WTC11 (cell line): ENCODE measurements at regions of chr17 and their contacts with region 1.

Region 1: DNA sequence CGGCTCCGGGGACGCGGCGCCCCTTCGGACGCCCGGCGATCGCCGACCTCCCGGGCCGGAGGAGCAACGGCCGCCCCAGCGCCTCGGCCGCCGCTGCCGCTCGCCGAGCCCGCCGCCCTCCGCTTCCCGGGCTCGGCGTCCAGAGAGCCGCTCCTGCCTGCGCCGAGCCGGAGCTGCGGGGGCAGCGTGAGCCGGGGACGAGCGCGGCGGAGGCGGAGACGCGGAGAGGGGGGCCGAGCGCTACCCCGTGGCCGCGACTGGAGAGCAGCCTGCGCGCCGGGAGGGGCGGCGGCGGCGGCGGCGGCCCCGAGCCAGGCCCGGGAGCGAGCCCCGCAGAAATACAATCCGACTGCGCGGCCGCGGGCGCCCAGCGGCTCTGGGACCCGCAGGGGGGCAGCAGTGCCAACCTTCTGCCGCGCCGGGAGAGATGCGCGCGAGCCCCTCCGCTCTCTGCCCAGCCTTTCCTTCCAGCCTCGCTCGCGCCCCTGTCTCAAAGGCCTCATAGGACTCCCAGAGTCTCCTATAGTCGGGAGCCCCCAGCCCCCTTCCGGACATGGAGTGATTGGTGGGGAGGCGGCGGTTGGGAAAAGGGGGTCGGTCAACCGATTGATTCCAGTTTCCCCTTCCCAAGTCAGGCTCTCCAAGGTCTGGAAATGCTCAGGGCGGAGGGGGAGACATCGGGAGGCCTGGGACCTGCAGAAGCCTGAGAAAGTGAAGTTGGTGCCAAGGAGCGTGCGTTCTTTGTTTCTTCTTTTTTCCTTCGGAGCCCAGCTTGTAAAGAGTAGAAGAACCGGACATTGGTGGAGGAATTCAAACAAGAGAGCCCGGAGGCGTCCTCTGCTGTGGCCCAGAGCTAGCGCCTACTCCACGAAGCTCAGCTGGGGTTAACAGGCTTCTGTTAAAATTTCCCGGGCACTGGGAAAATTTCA is 1.1 kb upstream of the SDK2 start:
- DNase-seq: peak; percentile 63
- ATAC-seq: peak; percentile 50
- H3K4me3 Mint-ChIP-seq: peak overlapping the region; percentile 67
- H3K27ac Mint-ChIP-seq: no peak overlapping the region
- H3K4me1 Mint-ChIP-seq: peaks cover 45% of the 10 kb centered on the region
- H3K27me3 Mint-ChIP-seq: peaks cover 74% of the 10 kb centered on the region
- CTCF ChIP-seq: no peak

Region 2: GRCh38 chr17:73429440-73430164 is 215.7 kb before region 1 on chr17:
- CTCF ChIA-PET with region 1: interaction called, 36 read pairs
- POLR2A ChIA-PET with region 1: no interaction called
- DNase-seq: peak; percentile 93
- ATAC-seq: peak; percentile 97
- H3K4me3 Mint-ChIP-seq: no peak overlapping the region
- H3K27ac Mint-ChIP-seq: no peak overlapping the region
- H3K4me1 Mint-ChIP-seq: peaks cover 19% of the 10 kb centered on the region
- H3K27me3 Mint-ChIP-seq: no peaks in the 10 kb centered on the region
- CTCF ChIP-seq: peak; percentile 95

Region 3: GRCh38 chr17:73595479-73595878 is 49.8 kb before region 1 on chr17:
- CTCF ChIA-PET with region 1: interaction called, 69 read pairs
- POLR2A ChIA-PET with region 1: no interaction called
- DNase-seq: peak; percentile 85
- ATAC-seq: peak; percentile 92
- H3K4me3 Mint-ChIP-seq: no peak overlapping the region
- H3K27ac Mint-ChIP-seq: no peak overlapping the region
- H3K4me1 Mint-ChIP-seq: peaks cover 7% of the 10 kb centered on the region
- H3K27me3 Mint-ChIP-seq: no peaks in the 10 kb centered on the region
- CTCF ChIP-seq: peak; percentile 75

Region 4: GRCh38 chr17:73655946-73656345 is 10.6 kb after region 1 on chr17:
- CTCF ChIA-PET with region 1: interaction called, 11 read pairs
- POLR2A ChIA-PET with region 1: interaction called, 3 read pairs
- DNase-seq: no peak
- ATAC-seq: no peak
- H3K4me3 Mint-ChIP-seq: no peak overlapping the region
- H3K27ac Mint-ChIP-seq: no peak overlapping the region
- H3K4me1 Mint-ChIP-seq: peaks cover 15% of the 10 kb centered on the region
- H3K27me3 Mint-ChIP-seq: peaks cover 17% of the 10 kb centered on the region
- CTCF ChIP-seq: no peak

Region 5: DNA sequence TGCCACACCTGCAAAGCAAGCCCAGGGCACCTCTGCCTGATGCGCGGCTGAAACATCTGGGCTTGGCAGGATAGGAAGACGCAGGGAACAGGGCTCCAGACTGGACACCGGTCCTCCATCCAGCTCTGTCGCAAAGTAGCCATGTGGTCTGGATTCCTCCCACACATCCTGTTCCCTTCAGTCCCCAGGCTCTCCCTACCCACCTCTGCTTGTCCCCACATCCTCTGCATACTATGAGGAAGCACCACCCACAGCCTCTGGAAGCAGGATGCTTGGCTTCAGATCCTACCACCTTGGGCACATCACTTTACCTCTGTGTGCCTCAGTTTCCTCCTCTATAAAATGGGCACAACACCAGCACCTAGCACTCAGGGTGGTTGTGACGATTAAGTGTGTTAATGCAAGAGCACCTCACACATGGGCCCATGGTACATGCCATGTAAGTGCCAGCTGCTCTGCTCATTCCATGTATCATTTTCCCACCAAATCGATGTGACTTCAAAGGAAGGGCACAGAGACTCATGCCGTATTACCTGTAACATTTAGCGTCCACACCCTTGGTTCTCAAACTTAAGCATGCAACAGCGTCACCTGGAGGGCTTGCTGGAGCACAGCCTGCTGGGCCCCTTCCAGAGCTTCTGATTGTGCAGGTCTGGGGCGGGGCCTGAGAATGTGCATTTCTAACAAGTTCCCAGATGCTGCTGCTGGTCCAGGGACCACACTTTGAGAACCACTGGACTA is 137.5 kb after region 1 on chr17:
- CTCF ChIA-PET with region 1: interaction called, 30 read pairs
- POLR2A ChIA-PET with region 1: no interaction called
- DNase-seq: peak; percentile 68
- ATAC-seq: peak; percentile 60
- H3K4me3 Mint-ChIP-seq: no peak overlapping the region
- H3K27ac Mint-ChIP-seq: no peak overlapping the region
- H3K4me1 Mint-ChIP-seq: peaks cover 49% of the 10 kb centered on the region
- H3K27me3 Mint-ChIP-seq: peaks cover 3% of the 10 kb centered on the region; the same call in 1 of the 2 replicates
- CTCF ChIP-seq: peak; percentile 42

Region 6: GRCh38 chr17:73841431-73842060 is 196.2 kb after region 1 on chr17:
- CTCF ChIA-PET with region 1: interaction called, 13 read pairs
- POLR2A ChIA-PET with region 1: no interaction called
- DNase-seq: peak; percentile 54
- ATAC-seq: peak; percentile 93
- H3K4me3 Mint-ChIP-seq: no peak overlapping the region
- H3K27ac Mint-ChIP-seq: no peak overlapping the region
- H3K4me1 Mint-ChIP-seq: peaks cover 2% of the 10 kb centered on the region; the same call in 1 of the 2 replicates
- H3K27me3 Mint-ChIP-seq: peaks cover 4% of the 10 kb centered on the region
- CTCF ChIP-seq: peak; percentile 50

Region 7: GRCh38 chr17:74697515-74697914 is 1052.2 kb after region 1 on chr17:
- CTCF ChIA-PET with region 1: no interaction called
- POLR2A ChIA-PET with region 1: no interaction called
- DNase-seq: no peak
- ATAC-seq: no peak
- H3K4me3 Mint-ChIP-seq: no peak overlapping the region
- H3K27ac Mint-ChIP-seq: no peak overlapping the region
- H3K4me1 Mint-ChIP-seq: no peaks in the 10 kb centered on the region
- H3K27me3 Mint-ChIP-seq: peaks cover 11% of the 10 kb centered on the region
- CTCF ChIP-seq: no peak